Prostate gland (tissue), 2 donors: ENCODE measurements at regions of chr4 and their contacts with region 1.

Region 1: DNA sequence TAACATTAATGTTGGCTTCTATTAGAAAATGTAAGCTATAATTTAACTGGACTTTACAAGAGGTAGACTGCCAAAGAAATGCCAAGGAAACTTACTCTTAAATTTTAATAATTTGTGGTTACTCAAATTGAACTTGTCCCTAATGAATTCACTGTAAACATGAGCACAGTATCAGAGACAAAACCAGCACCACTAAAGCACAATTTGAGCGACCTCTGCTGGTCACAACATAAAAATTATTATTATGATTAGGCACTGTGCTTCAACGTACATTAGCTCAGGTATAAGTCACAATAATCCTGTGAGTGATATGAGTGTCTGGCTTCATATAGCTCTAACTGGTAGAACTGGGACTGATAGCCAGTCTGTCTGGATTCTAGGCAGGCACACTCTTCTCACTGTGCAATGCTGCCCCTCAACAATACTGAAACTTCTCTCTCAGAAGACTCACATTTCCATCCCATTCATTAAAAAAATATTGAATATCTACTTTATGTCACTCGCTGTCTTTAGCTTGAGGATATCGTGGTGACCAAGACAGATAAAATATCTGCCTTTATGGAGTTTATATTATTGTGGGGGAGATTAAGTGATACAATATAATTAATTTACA is 8.0 kb downstream of the NUDT6 start:
- DNase-seq: no peak
- H3K4me3 ChIP-seq: no peak overlapping the region
- H3K27ac ChIP-seq: no peak overlapping the region
- H3K4me1 ChIP-seq: no peaks in the 10 kb centered on the region
- H3K27me3 ChIP-seq: no peaks in the 10 kb centered on the region
- CTCF ChIP-seq: peak; percentile 10 to 70 (median 36)
- POLR2A ChIP-seq: no peak

Region 2: DNA sequence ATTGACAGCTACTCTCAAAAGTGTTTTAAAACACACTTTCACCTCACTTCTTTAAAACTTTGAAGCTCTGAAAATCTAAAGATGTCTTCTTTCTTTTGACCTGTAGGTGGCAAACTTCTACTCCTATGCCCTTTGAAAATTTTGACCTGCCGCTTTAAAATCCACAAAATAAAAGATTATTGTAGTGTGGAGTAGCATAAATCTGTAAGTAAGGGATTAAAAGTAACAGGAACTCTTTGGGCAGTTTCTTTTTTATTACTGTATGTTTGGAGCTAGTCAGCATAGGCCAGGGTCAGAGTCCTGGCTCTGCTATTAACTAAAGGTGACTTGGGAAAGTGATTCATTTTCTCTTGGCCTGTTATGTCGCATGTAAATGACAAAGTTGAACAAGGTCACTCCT is 156.4 kb before region 1 on chr4:
- intact Hi-C with region 1: loop called (anchors 5 kb)
- DNase-seq: no peak
- H3K4me3 ChIP-seq: no peak overlapping the region
- H3K27ac ChIP-seq: no peak overlapping the region
- H3K4me1 ChIP-seq: no peaks in the 10 kb centered on the region
- H3K27me3 ChIP-seq: no peaks in the 10 kb centered on the region
- CTCF ChIP-seq: peak; percentile 55 to 80 (median 75)
- POLR2A ChIP-seq: no peak